ENCODE measurements at regions of chr15 and their contacts with region 1.

Region 1: GRCh38 chr15:78315686-78316282 is 16.4 kb upstream of the SKIC8 start:
- DNase-seq: peak in 1 of 10 donors; percentile 5
- H3K4me3 ChIP-seq: peak overlapping the region in 3 of 59 donors; percentile 9 to 40 (median 13)
- H3K27ac ChIP-seq: peak overlapping the region in 55 of 59 donors; percentile 36 to 92 (median 79)
- H3K27me3 ChIP-seq: no peaks in the 10 kb centered on the region
- CTCF ChIP-seq: peak in 18 of 56 donors; percentile 7 to 37 (median 18)

Region 2: GRCh38 chr15:78061963-78062435 is 253.8 kb before region 1 on chr15:
- intact Hi-C with region 1: no loop called
- DNase-seq: no peak
- H3K4me3 ChIP-seq: peak overlapping the region in 43 of 59 donors; percentile 1 to 48 (median 23)
- H3K27ac ChIP-seq: peak overlapping the region in 39 of 59 donors; percentile 8 to 90 (median 58)
- H3K27me3 ChIP-seq: no peaks in the 10 kb centered on the region
- CTCF ChIP-seq: no peak

Region 3: GRCh38 chr15:78264304-78265136 is 51.3 kb before region 1 on chr15 and contains the start of gene DNAJA4:
- intact Hi-C with region 1: loop called in 1 of 2 experiments (anchors 5 kb)
- DNase-seq: peak; percentile 49 to 73 (median 70)
- H3K4me3 ChIP-seq: peak within 1 kb of the TSS; percentile 59 to 95 (median 81)
- H3K27ac ChIP-seq: peak within 1 kb of the TSS; percentile 28 to 97 (median 89)
- H3K27me3 ChIP-seq: no peaks in the 10 kb centered on the region
- CTCF ChIP-seq: peak in 50 of 56 donors; percentile 6 to 64 (median 42)
- total RNA-seq, gene DNAJA4: 52.5 to 507 (median 97.1) TPM

Region 4: GRCh38 chr15:78284758-78285157 is 31.0 kb before region 1 on chr15:
- intact Hi-C with region 1: no loop called
- DNase-seq: no peak
- H3K4me3 ChIP-seq: no peak overlapping the region
- H3K27ac ChIP-seq: no peak overlapping the region
- H3K27me3 ChIP-seq: no peaks in the 10 kb centered on the region
- CTCF ChIP-seq: no peak

Region 5: GRCh38 chr15:78360426-78360825 is 44.6 kb after region 1 on chr15:
- intact Hi-C with region 1: loop called in 1 of 2 experiments (anchors 5 kb)
- DNase-seq: no peak
- H3K4me3 ChIP-seq: no peak overlapping the region
- H3K27ac ChIP-seq: no peak overlapping the region
- H3K27me3 ChIP-seq: peaks cover 0 to 60% (median 6%) of the 10 kb centered on the region in 45 donors
- CTCF ChIP-seq: no peak

Region 6: GRCh38 chr15:78625606-78626280 is 310.0 kb after region 1 on chr15:
- intact Hi-C with region 1: no loop called
- DNase-seq: no peak
- H3K4me3 ChIP-seq: no peak overlapping the region
- H3K27ac ChIP-seq: no peak overlapping the region
- H3K27me3 ChIP-seq: peaks cover 2 to 84% (median 43%) of the 10 kb centered on the region in 45 donors
- CTCF ChIP-seq: no peak

Measured in dorsolateral prefrontal cortex (tissue), 120 donors.